Posterior vena cava (tissue), 2 donors: ENCODE measurements at regions of chr20 and their contacts with region 1.

Region 1: GRCh38 chr20:50189681-50190582 is 698 bp upstream of the CEBPB start:
- DNase-seq: peak; percentile 98

Region 2: GRCh38 chr20:50301712-50302111 is 111.8 kb after region 1 on chr20:
- intact Hi-C with region 1: loop called (anchors 1 to 5 kb)
- DNase-seq: peak; percentile 14

Region 3: DNA sequence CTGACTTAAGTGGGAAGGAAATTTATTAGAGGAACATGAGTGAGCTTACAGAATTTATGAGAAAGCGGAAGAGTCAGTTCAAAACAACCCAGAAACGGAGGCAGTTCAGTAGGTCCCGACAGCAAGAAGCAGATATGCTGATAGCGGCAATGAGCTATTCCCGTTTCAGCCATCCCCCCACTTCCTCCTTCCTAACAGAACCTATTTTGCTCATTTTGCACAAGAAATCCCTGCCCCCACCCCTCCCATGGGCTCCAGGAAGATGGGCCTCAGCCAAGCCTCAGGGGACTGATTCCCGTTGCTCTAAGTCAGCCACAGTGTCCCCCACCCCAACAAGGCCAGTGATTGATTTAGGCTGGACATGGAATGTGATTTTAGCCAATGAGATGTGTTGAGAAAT is 158.2 kb after region 1 on chr20:
- intact Hi-C with region 1: no loop called
- DNase-seq: peak; percentile 87

Region 4: GRCh38 chr20:50379049-50379990 is 189.4 kb after region 1 on chr20:
- intact Hi-C with region 1: loop called (anchors 5 to 10 kb)
- DNase-seq: peak; percentile 96

Region 5: GRCh38 chr20:50575847-50576720 is 386.2 kb after region 1 on chr20:
- intact Hi-C with region 1: loop called (anchors 5 kb)
- DNase-seq: no peak